Naive thymus-derived CD4-positive, alpha-beta T cell (primary cell): ENCODE measurements at regions of chr1 and their contacts with region 1.

Region 1: GRCh38 chr1:167121375-167122120 is 27.7 kb downstream of the STYXL2 start:
- DNase-seq: peak in 8 of 9 donors; percentile 11 to 59 (median 43)
- ATAC-seq: peak; percentile 75
- H3K4me3 ChIP-seq: peak overlapping the region; percentile 79
- H3K4me3 Mint-ChIP-seq: peak overlapping the region; percentile 81 to 93 (median 88)
- H3K27ac ChIP-seq: no peak overlapping the region
- H3K27ac Mint-ChIP-seq: peak overlapping the region in 8 of 9 donors; percentile 17 to 82 (median 74)
- H3K4me1 ChIP-seq: peaks cover 0 to 8% of the 10 kb centered on the region in 2 donors
- H3K4me1 Mint-ChIP-seq: peaks cover 4 to 10% (median 7%) of the 10 kb centered on the region in 7 donors
- H3K27me3 ChIP-seq: no peaks in the 10 kb centered on the region
- H3K27me3 Mint-ChIP-seq: peaks cover 0 to 12% (median 5%) of the 10 kb centered on the region in 5 donors

Region 2: GRCh38 chr1:165928075-165928731 is 1193.3 kb before region 1 on chr1:
- CTCF ChIA-PET with region 1: no interaction called
- POLR2A ChIA-PET with region 1: no interaction called
- intact Hi-C with region 1: loop called in 1 of 2 experiments (anchors 10 kb)
- DNase-seq: peak in 6 of 9 donors; percentile 13 to 40 (median 26)
- ATAC-seq: peak; percentile 77
- H3K4me3 ChIP-seq: no peak overlapping the region
- H3K4me3 Mint-ChIP-seq: no peak overlapping the region
- H3K27ac ChIP-seq: no peak overlapping the region
- H3K27ac Mint-ChIP-seq: no peak overlapping the region
- H3K4me1 ChIP-seq: no peaks in the 10 kb centered on the region
- H3K4me1 Mint-ChIP-seq: peaks cover 0 to 10% (median 0%) of the 10 kb centered on the region in 7 donors
- H3K27me3 ChIP-seq: no peaks in the 10 kb centered on the region
- H3K27me3 Mint-ChIP-seq: peaks cover 14 to 42% (median 32%) of the 10 kb centered on the region in 5 donors

Region 3: DNA sequence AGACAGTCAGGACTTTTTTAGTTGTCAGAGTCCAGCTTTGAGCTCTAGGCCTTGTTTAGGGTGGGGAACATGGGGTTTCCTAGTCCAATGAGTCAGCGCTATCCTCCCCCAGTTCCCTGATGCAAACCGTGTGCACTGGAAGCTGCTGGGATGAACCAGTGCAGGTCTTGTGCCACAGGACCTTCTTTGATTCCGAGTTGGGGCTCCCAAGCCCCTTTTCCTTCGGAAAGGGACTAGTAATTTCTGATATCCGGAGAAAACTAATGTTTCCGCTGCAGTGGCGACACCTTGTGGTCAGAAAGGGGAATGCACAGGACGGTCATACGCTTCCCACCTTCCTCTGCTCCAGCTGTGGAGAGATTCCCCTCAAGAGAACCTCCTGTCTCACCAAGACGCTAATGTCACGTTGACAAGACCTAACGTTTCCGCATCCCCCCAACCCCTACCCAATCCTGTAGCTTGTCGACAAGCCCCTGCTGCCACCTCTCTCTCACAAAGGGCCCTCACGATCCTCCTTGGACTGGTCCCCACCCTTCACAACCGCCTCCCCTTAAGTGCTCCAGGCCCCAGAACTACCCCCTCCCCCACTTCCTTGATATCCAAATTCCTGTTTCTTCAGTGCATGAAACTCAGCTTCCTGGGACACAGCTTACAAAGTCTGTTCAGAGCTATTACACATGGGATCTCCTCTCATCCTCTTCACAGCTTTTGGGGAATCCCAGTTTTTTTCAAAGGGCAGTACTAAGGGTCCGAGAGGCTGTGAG is 62.3 kb before region 1 on chr1:
- CTCF ChIA-PET with region 1: interaction called, 67 read pairs
- POLR2A ChIA-PET with region 1: interaction called, 3 read pairs
- intact Hi-C with region 1: no loop called
- DNase-seq: peak; percentile 38 to 75 (median 57)
- ATAC-seq: peak; percentile 78
- H3K4me3 ChIP-seq: no peak overlapping the region
- H3K4me3 Mint-ChIP-seq: no peak overlapping the region
- H3K27ac ChIP-seq: no peak overlapping the region
- H3K27ac Mint-ChIP-seq: peak overlapping the region in 6 of 9 donors; percentile 5 to 55 (median 25)
- H3K4me1 ChIP-seq: peaks cover 0 to 4% of the 10 kb centered on the region in 2 donors
- H3K4me1 Mint-ChIP-seq: peaks cover 0 to 8% (median 6%) of the 10 kb centered on the region in 7 donors
- H3K27me3 ChIP-seq: no peaks in the 10 kb centered on the region
- H3K27me3 Mint-ChIP-seq: no peaks in the 10 kb centered on the region

Region 4: GRCh38 chr1:167090314-167090942 is 31.1 kb before region 1 on chr1 and contains the start of gene GPA33:
- CTCF ChIA-PET with region 1: interaction called, 13 read pairs
- POLR2A ChIA-PET with region 1: interaction called, 9 read pairs
- intact Hi-C with region 1: loop called (anchors 1 to 5 kb)
- DNase-seq: peak in 7 of 9 donors; percentile 71 to 89 (median 83)
- ATAC-seq: peak; percentile 95
- H3K4me3 ChIP-seq: peak within 1 kb of the TSS; percentile 45
- H3K4me3 Mint-ChIP-seq: peak within 1 kb of the TSS in 9 of 10 donors; percentile 63 to 93 (median 86)
- H3K27ac ChIP-seq: peak within 1 kb of the TSS; percentile 83
- H3K27ac Mint-ChIP-seq: peak within 1 kb of the TSS; percentile 95 to 100 (median 100)
- H3K4me1 ChIP-seq: peaks cover 25 to 33% of the 10 kb centered on the region in 2 donors
- H3K4me1 Mint-ChIP-seq: peaks cover 18 to 80% (median 34%) of the 10 kb centered on the region in 7 donors
- H3K27me3 ChIP-seq: no peaks in the 10 kb centered on the region
- H3K27me3 Mint-ChIP-seq: no peaks in the 10 kb centered on the region
- total RNA-seq, gene GPA33: 5.4 to 32.6 (median 11.3) TPM

Region 5: GRCh38 chr1:167141963-167142362 is 20.4 kb after region 1 on chr1:
- CTCF ChIA-PET with region 1: no interaction called
- POLR2A ChIA-PET with region 1: no interaction called
- intact Hi-C with region 1: no loop called
- DNase-seq: no peak
- ATAC-seq: no peak
- H3K4me3 ChIP-seq: no peak overlapping the region
- H3K4me3 Mint-ChIP-seq: no peak overlapping the region
- H3K27ac ChIP-seq: no peak overlapping the region
- H3K27ac Mint-ChIP-seq: no peak overlapping the region
- H3K4me1 ChIP-seq: no peaks in the 10 kb centered on the region
- H3K4me1 Mint-ChIP-seq: no peaks in the 10 kb centered on the region
- H3K27me3 ChIP-seq: no peaks in the 10 kb centered on the region
- H3K27me3 Mint-ChIP-seq: peaks cover 0 to 53% (median 15%) of the 10 kb centered on the region in 5 donors

Region 6: DNA sequence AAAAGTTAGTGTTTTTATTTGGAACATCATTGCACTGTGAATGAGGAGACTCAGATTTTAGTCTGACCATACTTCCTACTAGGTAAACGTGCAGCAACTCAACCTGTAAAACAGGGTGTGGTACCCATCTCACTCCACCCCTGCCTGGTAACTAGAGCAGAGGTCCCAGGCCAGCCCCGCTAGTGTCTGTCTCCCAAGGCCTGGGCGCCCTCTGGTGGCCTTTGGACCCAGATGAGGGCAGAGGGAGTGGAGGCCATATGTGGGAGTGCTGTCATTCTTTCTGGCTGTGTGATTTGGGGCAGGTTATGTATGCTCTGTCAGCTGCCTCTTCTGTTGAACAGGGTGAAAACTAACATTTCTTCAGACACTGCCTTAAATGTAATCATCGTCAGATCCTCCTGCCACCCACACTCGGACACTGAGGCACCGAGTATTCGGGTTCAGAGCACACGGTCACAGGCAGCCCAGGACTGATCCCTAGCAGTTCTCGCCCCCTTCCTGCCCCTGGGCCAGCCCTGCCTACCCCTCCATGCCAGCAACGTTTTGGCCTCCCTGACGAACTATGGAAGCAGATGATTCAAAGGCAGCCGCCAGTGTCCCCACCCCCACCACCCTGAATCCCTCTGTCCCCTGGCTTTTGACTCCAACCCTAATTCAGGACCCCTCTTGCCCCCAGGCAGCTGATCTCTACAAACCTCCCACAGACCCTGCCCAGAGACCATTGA is 320.7 kb after region 1 on chr1:
- CTCF ChIA-PET with region 1: interaction called, 5 read pairs
- POLR2A ChIA-PET with region 1: no interaction called
- intact Hi-C with region 1: loop called in 1 of 2 experiments (anchors 2 kb)
- DNase-seq: peak; percentile 79 to 89 (median 87)
- ATAC-seq: peak; percentile 90
- H3K4me3 ChIP-seq: no peak overlapping the region
- H3K4me3 Mint-ChIP-seq: peak overlapping the region; percentile 17 to 75 (median 52)
- H3K27ac ChIP-seq: peak overlapping the region; percentile 57
- H3K27ac Mint-ChIP-seq: peak overlapping the region; percentile 71 to 96 (median 92)
- H3K4me1 ChIP-seq: peaks cover 59 to 85% of the 10 kb centered on the region in 2 donors
- H3K4me1 Mint-ChIP-seq: peaks cover 51 to 99% (median 88%) of the 10 kb centered on the region in 7 donors
- H3K27me3 ChIP-seq: no peaks in the 10 kb centered on the region
- H3K27me3 Mint-ChIP-seq: no peaks in the 10 kb centered on the region

Region 7: GRCh38 chr1:167553136-167554027 is 431.8 kb after region 1 on chr1 and contains the start of gene CREG1:
- CTCF ChIA-PET with region 1: no interaction called
- POLR2A ChIA-PET with region 1: no interaction called
- intact Hi-C with region 1: loop called in 1 of 2 experiments (anchors 2 kb)
- DNase-seq: peak; percentile 82 to 92 (median 88)
- ATAC-seq: peak; percentile 98
- H3K4me3 ChIP-seq: peak within 1 kb of the TSS; percentile 71
- H3K4me3 Mint-ChIP-seq: peak within 1 kb of the TSS; percentile 85 to 97 (median 92)
- H3K27ac ChIP-seq: peak within 1 kb of the TSS; percentile 72
- H3K27ac Mint-ChIP-seq: peak within 1 kb of the TSS; percentile 43 to 88 (median 80)
- H3K4me1 ChIP-seq: peaks cover 19% of the 10 kb centered on the region in 2 donors
- H3K4me1 Mint-ChIP-seq: peaks cover 35 to 58% (median 46%) of the 10 kb centered on the region in 7 donors
- H3K27me3 ChIP-seq: no peaks in the 10 kb centered on the region
- H3K27me3 Mint-ChIP-seq: peaks cover 0 to 4% (median 0%) of the 10 kb centered on the region in 5 donors
- total RNA-seq, gene CREG1: 10.6 to 33.4 (median 23.1) TPM